ENCODE measurements at regions of chr3 and their contacts with region 1.

Region 1: GRCh38 chr3:36868614-36869436 is 76.0 kb downstream of the TRANK1 start:
- DNase-seq: peak in 6 of 10 donors; percentile 19 to 84 (median 53)

Region 2: DNA sequence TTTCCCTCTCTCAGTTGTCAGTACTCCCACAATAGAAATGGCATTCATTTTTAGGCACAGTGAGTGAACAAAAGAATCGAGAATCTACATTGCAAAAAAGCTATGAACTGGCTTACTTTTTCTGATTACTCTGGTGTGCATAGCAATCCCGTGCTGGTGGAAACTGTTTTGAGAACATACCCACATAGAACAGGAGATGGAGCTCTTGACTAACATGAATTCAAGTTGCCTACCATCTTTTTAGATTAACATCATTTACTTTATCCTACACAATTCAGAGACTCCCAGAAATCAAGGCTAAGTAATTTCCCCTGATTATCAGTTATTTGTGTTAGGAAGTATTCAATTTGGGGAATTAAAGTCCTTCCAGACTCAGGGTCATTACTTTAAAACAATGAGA is 902.9 kb before region 1 on chr3:
- intact Hi-C with region 1: loop called (anchors 2 kb)
- DNase-seq: no peak

Region 3: GRCh38 chr3:36729204-36730056 is 139.4 kb before region 1 on chr3:
- intact Hi-C with region 1: loop called (anchors 1 kb)
- DNase-seq: no peak

Region 4: DNA sequence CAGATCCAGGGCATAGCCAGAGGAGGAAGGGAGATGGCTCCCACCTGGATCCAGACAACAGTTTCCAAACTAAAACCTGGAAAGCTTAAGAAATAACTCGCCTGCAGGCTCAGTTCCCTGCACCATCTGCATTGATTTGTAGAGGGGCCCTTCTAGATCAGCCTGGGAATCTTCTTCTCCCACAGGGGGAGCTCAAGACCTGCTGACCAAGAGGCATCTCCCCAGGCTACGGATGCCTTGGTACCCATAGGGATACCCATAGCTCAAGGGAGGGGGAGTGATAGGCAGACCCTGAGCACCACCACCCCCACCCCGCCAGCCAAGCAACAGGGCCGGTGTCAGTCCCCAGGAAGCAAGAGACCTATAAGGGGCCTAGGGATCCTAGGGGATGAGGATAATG is 76.5 kb before region 1 on chr3:
- intact Hi-C with region 1: loop called (anchors 2 kb)
- DNase-seq: peak in 1 of 10 donors; percentile 80

Region 5: GRCh38 chr3:36843065-36844051 is 25.5 kb before region 1 on chr3:
- intact Hi-C with region 1: no loop called
- DNase-seq: peak in 4 of 10 donors; percentile 21 to 82 (median 47)

Region 6: DNA sequence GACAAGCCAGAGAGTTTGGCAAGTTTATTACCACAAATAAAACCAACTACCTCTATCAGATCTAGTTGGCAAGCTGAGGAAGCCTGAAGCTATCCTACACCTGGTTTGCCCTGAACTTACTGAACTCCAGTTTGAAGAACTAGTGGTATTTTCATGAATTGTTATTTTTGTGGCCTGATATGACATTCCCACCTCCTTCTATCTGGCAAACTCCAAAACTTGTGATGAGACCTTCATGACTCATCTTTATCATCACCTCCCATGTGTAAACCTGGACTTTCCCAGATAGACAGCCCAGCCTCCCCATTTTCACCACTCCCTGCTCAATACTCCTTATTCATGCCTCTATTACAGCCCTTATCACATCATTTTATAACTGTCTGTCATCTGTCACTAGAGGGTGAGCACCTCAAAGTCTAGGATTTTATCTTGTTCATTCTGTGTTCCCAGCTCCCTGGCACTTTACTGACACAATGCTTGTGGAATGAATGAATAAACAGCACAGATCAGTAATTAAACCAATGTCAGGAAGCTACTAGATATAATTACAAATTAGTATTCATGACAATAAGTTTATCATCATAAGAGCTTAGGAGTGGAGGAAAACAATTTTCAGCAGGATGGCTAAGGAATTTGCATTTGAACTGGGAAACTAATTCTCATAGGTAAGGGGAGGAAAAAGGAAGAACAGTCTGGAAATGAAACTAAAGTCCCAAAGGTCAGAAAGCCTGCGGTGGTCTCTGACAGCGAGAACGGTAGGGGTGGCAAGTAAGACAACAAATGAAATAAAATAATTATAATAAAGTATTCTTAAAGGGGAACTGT is 89.2 kb after region 1 on chr3:
- intact Hi-C with region 1: no loop called
- DNase-seq: no peak

Measured in posterior cingulate gyrus (tissue), 11 donors.